ENCODE measurements at regions of chrX and their contacts with region 1.

Region 1: DNA sequence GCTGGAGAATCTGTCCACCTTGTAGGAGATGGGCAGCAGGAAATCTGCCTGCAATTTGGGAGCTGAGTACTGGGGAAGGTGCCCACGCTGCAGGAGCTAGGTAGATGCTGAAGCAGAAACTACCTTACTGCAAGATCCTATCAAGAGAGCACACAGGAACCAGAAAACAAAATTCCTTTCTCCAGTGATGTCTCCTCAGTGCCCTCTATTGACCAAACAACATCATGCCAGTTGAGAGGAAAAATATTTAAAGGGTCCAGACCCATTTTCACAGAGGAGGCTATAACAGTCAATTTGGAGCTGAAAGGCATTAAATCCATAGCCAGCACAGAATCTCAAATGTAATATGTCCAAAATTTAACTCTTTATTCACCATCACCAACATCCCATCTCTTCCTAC is 406.8 kb downstream of the SLITRK2 start:
- DNase-seq: peak; percentile 36
- H3K4me3 Mint-ChIP-seq: no peak overlapping the region
- H3K27ac Mint-ChIP-seq: no peak overlapping the region
- H3K4me1 Mint-ChIP-seq: no peaks in the 10 kb centered on the region
- H3K27me3 Mint-ChIP-seq: no peaks in the 10 kb centered on the region
- CTCF ChIP-seq: peak; percentile 49

Region 2: DNA sequence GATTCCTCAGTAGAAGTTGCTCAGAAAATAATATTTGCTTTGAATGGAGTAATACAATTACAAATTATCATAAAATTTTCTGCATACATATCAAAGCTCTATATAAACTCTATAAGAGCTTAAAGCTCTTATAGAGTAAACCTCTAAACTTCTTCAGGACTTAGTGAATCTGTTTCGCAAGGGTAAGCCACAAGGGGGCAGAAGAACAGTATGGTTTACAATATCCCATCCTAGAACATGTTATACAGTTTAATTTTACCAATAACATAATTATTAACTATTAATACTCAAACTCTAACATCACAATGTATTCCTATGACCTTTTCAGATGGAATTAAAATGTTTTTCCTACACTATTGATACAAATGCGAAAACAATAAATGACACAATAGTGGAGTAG is 1010.9 kb before region 1 on chrX:
- CTCF ChIA-PET with region 1: interaction called, 4 read pairs
- POLR2A ChIA-PET with region 1: no interaction called
- intact Hi-C with region 1: loop called (anchors 2 kb)
- DNase-seq: peak; percentile 65
- H3K4me3 Mint-ChIP-seq: no peak overlapping the region
- H3K27ac Mint-ChIP-seq: no peak overlapping the region
- H3K4me1 Mint-ChIP-seq: no peaks in the 10 kb centered on the region
- H3K27me3 Mint-ChIP-seq: no peaks in the 10 kb centered on the region
- CTCF ChIP-seq: peak; percentile 49

Region 3: GRCh38 chrX:145825896-145826295 is 398.5 kb before region 1 on chrX:
- CTCF ChIA-PET with region 1: interaction called, 18 read pairs
- POLR2A ChIA-PET with region 1: no interaction called
- intact Hi-C with region 1: loop called (anchors 2 kb)
- DNase-seq: peak; percentile 65
- H3K4me3 Mint-ChIP-seq: no peak overlapping the region
- H3K27ac Mint-ChIP-seq: no peak overlapping the region
- H3K4me1 Mint-ChIP-seq: no peaks in the 10 kb centered on the region
- H3K27me3 Mint-ChIP-seq: no peaks in the 10 kb centered on the region
- CTCF ChIP-seq: peak; percentile 32